ENCODE measurements at regions of chr16 and their contacts with region 1.

Region 1: DNA sequence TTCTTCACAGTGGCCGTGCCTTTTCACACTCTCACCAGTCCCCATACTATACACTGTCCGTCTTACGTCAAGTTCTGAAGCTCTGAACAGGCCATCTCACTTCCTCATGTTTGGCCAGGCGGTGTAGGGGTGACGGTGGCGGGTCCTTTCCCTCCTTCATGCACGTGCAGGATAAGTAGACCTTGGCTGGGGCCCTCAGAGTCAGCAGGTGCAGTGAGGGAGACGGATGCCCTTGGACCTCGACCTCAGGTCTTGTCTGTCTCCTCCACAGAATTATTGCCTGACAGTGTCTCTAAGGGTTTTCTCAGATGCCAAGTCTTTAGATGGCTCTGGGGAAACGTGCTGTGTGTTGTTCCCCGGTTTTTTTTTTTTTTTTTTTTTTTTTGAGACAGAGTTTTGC is 37.6 kb downstream of the RAB11FIP3 start:
- DNase-seq: no peak
- H3K4me3 Mint-ChIP-seq: no peak overlapping the region
- H3K27ac Mint-ChIP-seq: no peak overlapping the region
- H3K4me1 Mint-ChIP-seq: peaks cover 9% of the 10 kb centered on the region
- H3K27me3 Mint-ChIP-seq: no peaks in the 10 kb centered on the region
- CTCF ChIP-seq: no peak

Region 2: DNA sequence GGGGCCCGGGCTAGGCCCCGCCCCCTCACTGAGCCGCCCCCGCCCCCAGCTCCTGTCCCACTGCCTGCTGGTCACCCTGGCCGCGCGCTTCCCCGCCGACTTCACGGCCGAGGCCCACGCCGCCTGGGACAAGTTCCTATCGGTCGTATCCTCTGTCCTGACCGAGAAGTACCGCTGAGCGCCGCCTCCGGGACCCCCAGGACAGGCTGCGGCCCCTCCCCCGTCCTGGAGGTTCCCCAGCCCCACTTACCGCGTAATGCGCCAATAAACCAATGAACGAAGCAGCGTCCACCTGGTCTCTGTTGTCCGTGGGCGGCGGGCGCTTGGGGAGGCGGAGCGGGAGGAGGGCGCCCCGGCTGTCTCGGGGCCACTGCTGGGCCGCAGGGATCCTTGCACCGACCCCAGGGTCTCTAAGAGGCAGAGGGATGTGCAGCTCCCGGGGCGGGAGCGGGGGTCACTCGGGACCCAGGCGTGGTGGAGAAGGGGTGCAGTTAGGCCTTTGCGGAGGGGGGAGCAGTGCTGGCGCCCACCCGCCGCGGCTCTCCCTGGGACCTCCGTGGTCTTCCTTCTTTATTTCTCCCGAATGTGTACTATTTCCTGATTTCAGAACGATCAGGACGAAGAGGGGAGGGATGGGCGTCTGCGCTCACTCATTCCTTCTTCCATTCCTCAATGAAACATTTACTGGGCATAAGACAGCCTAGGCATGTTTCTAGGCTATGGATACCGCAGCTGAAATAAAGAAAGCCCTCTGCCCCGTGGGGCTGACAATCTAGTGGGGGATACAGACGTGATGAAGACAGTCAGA is 308.6 kb before region 1 on chr16:
- CTCF ChIA-PET with region 1: no interaction called
- intact Hi-C with region 1: no loop called
- DNase-seq: no peak
- H3K4me3 Mint-ChIP-seq: peak overlapping the region; percentile 72
- H3K27ac Mint-ChIP-seq: peak overlapping the region; percentile 12
- H3K4me1 Mint-ChIP-seq: no peaks in the 10 kb centered on the region
- H3K27me3 Mint-ChIP-seq: peaks cover 73% of the 10 kb centered on the region
- CTCF ChIP-seq: no peak

Region 3: GRCh38 chr16:518858-519257 is 55.8 kb after region 1 on chr16:
- CTCF ChIA-PET with region 1: interaction called, 11 read pairs
- intact Hi-C with region 1: no loop called
- DNase-seq: no peak
- H3K4me3 Mint-ChIP-seq: no peak overlapping the region
- H3K27ac Mint-ChIP-seq: no peak overlapping the region
- H3K4me1 Mint-ChIP-seq: peaks cover 7% of the 10 kb centered on the region
- H3K27me3 Mint-ChIP-seq: no peaks in the 10 kb centered on the region
- CTCF ChIP-seq: no peak

Measured in Calu3 (cell line).